ENCODE measurements at regions of chr1 and their contacts with region 1.

Region 1: DNA sequence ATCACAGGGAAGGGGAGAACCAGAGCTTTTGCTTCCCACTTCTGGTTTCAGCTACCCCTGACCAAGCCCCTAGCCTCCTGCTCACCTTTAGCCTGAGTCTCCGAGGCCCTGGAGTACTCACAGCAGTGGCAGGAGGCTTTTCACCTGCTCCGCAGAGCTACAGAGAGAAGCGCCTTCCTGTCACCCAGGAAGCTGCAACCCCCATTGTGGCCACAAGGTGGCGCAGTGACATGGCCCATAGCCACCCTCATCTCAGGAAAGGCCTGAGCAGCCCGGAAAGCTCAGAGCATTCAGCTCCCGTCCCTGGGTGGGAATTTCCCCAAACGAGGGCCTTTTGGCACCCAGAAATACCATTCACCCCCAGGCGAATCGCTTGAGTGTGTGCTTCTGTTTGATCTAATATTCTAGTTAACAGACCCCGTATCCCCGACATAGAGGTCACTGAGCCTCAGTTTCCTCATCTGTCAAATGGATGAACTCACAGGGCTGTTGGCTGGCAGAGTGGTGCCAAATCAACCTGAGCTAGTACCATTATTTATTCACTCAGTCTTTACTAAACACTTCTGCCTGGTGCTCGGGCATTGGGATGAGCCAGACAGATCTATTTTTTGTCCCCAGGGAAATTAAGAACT is 25.3 kb downstream of the A3GALT2 start:
- DNase-seq: peak; percentile 62
- ATAC-seq: peak; percentile 88
- H3K4me3 ChIP-seq: no peak overlapping the region
- H3K27ac ChIP-seq: no peak overlapping the region
- H3K4me1 ChIP-seq: 0 out of 2 replicates have a peak, but pooled peaks cover 1% of the 10 kb centered on the region
- H3K27me3 ChIP-seq: no peaks in the 10 kb centered on the region
- CTCF ChIP-seq: peak; percentile 96
- EP300 ChIP-seq: no peak
- POLR2A ChIP-seq: no peak
- RAD21 ChIP-seq: peak; percentile 89

Region 2: DNA sequence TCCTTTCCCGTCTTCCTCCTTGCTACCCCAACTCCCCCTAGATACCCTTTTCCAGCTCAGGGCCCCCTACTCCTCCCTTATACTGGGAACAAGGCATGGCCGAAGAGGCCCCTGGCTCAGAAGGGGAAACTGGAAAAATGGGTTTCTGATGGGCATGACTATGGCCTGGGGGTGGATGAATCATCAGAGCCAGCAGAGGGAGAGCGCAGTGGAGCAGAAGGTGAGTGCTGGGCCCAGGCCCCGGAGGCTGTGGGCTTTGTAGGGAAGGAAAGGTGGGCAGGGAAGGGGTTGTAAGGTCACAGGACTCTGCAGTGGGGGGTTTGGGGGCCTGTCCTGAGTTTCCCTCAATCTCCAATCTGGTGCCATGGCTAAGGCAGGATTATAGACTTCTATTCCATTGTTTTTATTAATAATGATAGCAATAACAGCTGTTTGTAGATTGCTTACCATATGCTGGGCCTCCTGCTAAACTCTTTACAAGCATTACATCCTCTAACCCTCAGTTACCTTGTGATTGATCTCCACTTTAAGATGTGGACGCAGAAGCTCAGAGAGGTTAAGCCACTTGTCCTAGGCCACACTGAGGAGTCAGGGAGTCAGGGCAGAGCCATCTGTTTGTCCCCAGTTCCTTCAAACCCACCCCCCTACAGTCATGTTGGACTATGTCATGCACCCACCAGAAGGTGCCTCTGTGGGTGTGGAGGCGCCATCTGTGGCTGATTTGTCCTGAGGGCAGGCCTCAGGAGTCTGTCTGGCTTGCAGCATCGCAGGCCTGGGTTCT is 75.5 kb before region 1 on chr1:
- CTCF ChIA-PET with region 1: interaction called, 12 read pairs
- POLR2A ChIA-PET with region 1: no interaction called
- in situ Hi-C with region 1: loop called (anchors 5 kb)
- intact Hi-C with region 1: no loop called
- DNase-seq: no peak
- ATAC-seq: peak; percentile 78
- H3K4me3 ChIP-seq: no peak overlapping the region
- H3K27ac ChIP-seq: no peak overlapping the region
- H3K4me1 ChIP-seq: peaks cover 30% of the 10 kb centered on the region; the same call in 1 of the 2 replicates
- H3K27me3 ChIP-seq: peaks cover 0 to 4% of the 10 kb centered on the region in 2 experiments; a peak in 1 of 5 replicates
- CTCF ChIP-seq: peak; percentile 42
- EP300 ChIP-seq: no peak
- POLR2A ChIP-seq: no peak
- RAD21 ChIP-seq: no peak

Region 3: DNA sequence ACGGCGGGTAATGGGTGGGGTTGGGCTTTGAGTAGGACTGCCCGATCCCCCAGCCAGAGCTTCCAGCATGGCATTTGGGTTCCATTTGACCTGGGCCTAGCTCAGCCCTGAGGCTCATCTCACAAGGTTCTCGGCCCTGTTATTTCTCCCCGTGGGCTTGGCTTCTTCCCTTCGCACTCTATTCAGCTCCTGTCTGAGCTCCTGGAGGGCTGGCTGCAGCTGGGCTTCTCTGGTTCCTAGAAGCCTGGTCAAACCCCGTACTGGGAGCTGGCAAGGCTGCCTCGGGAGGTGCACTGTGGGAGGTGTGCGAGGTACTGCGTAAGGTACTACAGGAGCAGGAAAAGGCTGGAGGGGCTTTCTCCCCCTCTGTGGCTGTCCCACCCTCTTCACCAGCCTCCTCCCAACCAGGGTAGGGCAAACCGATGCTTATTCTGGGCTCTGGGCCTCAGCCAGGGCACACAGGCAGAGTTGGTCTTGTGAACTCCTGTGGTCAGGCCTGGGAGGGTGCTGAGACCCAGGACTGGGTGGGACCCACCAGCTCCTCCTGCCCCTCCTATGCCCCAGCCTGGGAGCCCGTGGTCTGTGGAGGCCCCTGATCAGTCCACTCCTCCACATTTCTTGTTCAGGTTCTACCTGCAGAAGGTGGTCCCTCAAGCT is 24.5 kb after region 1 on chr1:
- CTCF ChIA-PET with region 1: no interaction called
- POLR2A ChIA-PET with region 1: no interaction called
- in situ Hi-C with region 1: no loop called
- intact Hi-C with region 1: no loop called
- DNase-seq: no peak
- ATAC-seq: peak; percentile 44
- H3K4me3 ChIP-seq: no peak overlapping the region
- H3K27ac ChIP-seq: no peak overlapping the region
- H3K4me1 ChIP-seq: no peaks in the 10 kb centered on the region
- H3K27me3 ChIP-seq: peaks cover 6 to 33% of the 10 kb centered on the region in 2 experiments; a peak in 4 of 5 replicates
- CTCF ChIP-seq: no peak
- EP300 ChIP-seq: no peak
- POLR2A ChIP-seq: no peak
- RAD21 ChIP-seq: no peak

Region 4: GRCh38 chr1:33455539-33456501 is 160.3 kb after region 1 on chr1:
- CTCF ChIA-PET with region 1: no interaction called
- POLR2A ChIA-PET with region 1: no interaction called
- in situ Hi-C with region 1: no loop called
- intact Hi-C with region 1: loop called (anchors 5 kb)
- DNase-seq: peak; percentile 26
- ATAC-seq: peak; percentile 85
- H3K4me3 ChIP-seq: no peak overlapping the region
- H3K27ac ChIP-seq: no peak overlapping the region
- H3K4me1 ChIP-seq: no peaks in the 10 kb centered on the region
- H3K27me3 ChIP-seq: peaks cover 0 to 14% of the 10 kb centered on the region in 2 experiments; a peak in 1 of 5 replicates
- CTCF ChIP-seq: peak; percentile 77
- EP300 ChIP-seq: no peak
- POLR2A ChIP-seq: no peak
- RAD21 ChIP-seq: no peak

Region 5: GRCh38 chr1:33472349-33472980 is 176.9 kb after region 1 on chr1 and contains the start of gene ZSCAN20:
- CTCF ChIA-PET with region 1: interaction called, 8 read pairs
- POLR2A ChIA-PET with region 1: no interaction called
- in situ Hi-C with region 1: no loop called
- intact Hi-C with region 1: loop called (anchors 2 kb)
- DNase-seq: peak; percentile 96
- ATAC-seq: peak; percentile 97
- H3K4me3 ChIP-seq: peak within 1 kb of the TSS; percentile 66 to 91 (median 78)
- H3K27ac ChIP-seq: no peak within 1 kb of the TSS
- H3K4me1 ChIP-seq: peaks cover 29% of the 10 kb centered on the region
- H3K27me3 ChIP-seq: peaks cover 0 to 2% of the 10 kb centered on the region in 2 experiments; a peak in 1 of 5 replicates
- CTCF ChIP-seq: no peak
- EP300 ChIP-seq: no peak
- POLR2A ChIP-seq: no peak; a peak in 1 of 4 replicates
- RAD21 ChIP-seq: no peak
- total RNA-seq, gene ZSCAN20: 2.8 TPM in 2 replicates